Heart left ventricle (tissue), 16 donors: ENCODE measurements at regions of chr9 and their contacts with region 1.

Region 1: GRCh38 chr9:7879551-7880245 is 80.1 kb upstream of the DMAC1 start:
- DNase-seq: no peak
- ATAC-seq: no peak
- H3K4me3 ChIP-seq: no peak overlapping the region
- H3K27ac ChIP-seq: no peak overlapping the region
- H3K4me1 ChIP-seq: no peaks in the 10 kb centered on the region
- H3K27me3 ChIP-seq: no peaks in the 10 kb centered on the region
- CTCF ChIP-seq: no peak
- POLR2A ChIP-seq: no peak

Region 2: GRCh38 chr9:7834531-7834930 is 45.2 kb before region 1 on chr9:
- intact Hi-C with region 1: loop called in 1 of 10 experiments (anchors 10 kb)
- DNase-seq: no peak
- ATAC-seq: no peak
- H3K4me3 ChIP-seq: no peak overlapping the region
- H3K27ac ChIP-seq: no peak overlapping the region
- H3K4me1 ChIP-seq: no peaks in the 10 kb centered on the region
- H3K27me3 ChIP-seq: no peaks in the 10 kb centered on the region
- CTCF ChIP-seq: no peak
- POLR2A ChIP-seq: no peak